SK-N-SH (cell line): ENCODE measurements at regions of chrX and their contacts with region 1.

Region 1: DNA sequence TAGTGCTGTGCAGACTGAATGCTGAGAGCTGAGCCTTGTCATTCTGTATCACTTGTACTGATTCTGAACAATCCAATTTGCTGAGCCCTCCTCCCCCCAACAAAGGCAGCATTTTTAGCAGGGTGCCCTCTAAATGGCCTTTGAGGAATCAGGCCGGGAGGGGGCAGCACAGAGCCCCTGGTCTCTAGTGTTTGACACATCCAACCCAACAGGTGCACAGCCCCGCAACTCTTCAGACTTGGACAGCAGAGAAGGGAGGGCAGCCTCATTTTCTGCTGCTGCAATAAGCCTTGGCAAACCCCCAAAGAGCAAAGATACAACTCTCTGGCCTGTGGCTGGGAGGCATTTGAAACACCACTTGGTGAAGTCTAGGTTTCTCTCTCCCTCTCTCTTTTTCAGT is 3.4 kb downstream of the ATP1B4 start:
- DNase-seq: peak; percentile 24
- H3K4me3 ChIP-seq: no peak overlapping the region
- H3K27ac ChIP-seq: no peak overlapping the region
- H3K4me1 ChIP-seq: no peaks in the 10 kb centered on the region
- H3K27me3 ChIP-seq: peaks cover 44% of the 10 kb centered on the region; the same call in 1 of the 2 replicates
- CTCF ChIP-seq: peak; percentile 63
- EP300 ChIP-seq: no peak
- RAD21 ChIP-seq: peak; percentile 46; the same call in 1 of the 2 replicates

Region 2: GRCh38 chrX:120244735-120245498 is 120.4 kb before region 1 on chrX:
- CTCF ChIA-PET with region 1: no interaction called
- POLR2A ChIA-PET with region 1: no interaction called
- DNase-seq: peak; percentile 54
- H3K4me3 ChIP-seq: peak overlapping the region; percentile 72 to 73
- H3K27ac ChIP-seq: peak overlapping the region; percentile 67 to 69
- H3K4me1 ChIP-seq: peaks cover 0 to 3% of the 10 kb centered on the region in 2 experiments; a peak in 2 of 4 replicates
- H3K27me3 ChIP-seq: no peaks in the 10 kb centered on the region; the same call in 1 of the 2 replicates
- CTCF ChIP-seq: no peak
- EP300 ChIP-seq: no peak
- RAD21 ChIP-seq: no peak

Region 3: DNA sequence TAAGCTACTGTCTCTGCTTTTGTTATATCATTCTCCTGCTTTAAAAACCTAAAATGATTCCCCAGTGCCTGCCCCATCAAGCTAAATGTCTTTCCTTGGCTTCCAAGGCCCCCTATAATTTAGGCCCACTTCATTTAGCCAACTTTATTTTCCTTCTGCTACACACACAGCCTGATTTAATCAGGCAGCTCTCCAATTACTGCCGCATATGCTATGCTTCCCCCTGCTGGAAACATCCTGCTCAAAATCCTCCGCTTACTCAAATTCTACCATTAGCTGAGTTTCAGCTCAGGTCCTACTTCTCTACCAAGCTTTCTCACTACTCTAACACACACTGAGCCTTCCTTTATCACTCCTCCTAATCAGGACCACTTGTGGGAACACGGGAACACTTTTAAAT is 86.8 kb after region 1 on chrX:
- CTCF ChIA-PET with region 1: interaction called, 10 read pairs
- POLR2A ChIA-PET with region 1: no interaction called
- DNase-seq: peak; percentile 50
- H3K4me3 ChIP-seq: no peak overlapping the region
- H3K27ac ChIP-seq: no peak overlapping the region
- H3K4me1 ChIP-seq: peaks cover 0 to 3% of the 10 kb centered on the region in 2 experiments; a peak in 1 of 4 replicates
- H3K27me3 ChIP-seq: no peaks in the 10 kb centered on the region
- CTCF ChIP-seq: peak; percentile 69
- EP300 ChIP-seq: no peak
- RAD21 ChIP-seq: peak; percentile 60